ENCODE measurements at regions of chr4 and their contacts with region 1.

Region 1: DNA sequence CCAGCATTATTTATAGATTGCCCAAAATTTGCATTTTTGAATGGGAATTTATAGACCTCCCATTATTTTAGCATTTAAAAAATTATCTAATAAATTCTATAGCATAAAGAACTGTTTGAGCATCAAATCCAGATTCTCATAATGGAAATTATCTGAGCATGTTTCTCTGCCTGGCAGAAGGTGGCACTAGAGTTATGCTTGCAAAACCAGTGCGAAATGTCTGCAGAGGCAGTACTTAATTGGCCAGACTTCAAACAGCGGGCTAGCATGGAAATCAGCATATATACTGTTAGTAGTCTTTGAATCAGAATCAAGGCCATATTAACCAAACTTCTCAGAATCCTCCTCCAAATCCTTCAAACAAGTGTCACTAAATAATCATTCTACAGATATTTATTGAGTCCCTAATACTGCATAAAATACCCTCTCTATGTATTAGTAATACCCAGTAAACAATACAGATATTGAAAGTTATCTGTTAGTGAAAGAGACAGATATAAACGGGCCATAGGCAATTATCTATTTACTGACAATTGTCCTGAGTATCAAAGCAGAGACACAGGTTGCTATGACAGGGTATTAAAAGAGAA is 78.7 kb upstream of the DCLK2 start:
- DNase-seq: peak; percentile 87
- ATAC-seq: peak; percentile 56
- H3K4me3 ChIP-seq: no peak overlapping the region
- H3K27ac ChIP-seq: no peak overlapping the region
- H3K4me1 ChIP-seq: peaks cover 14% of the 10 kb centered on the region
- H3K27me3 ChIP-seq: no peaks in the 10 kb centered on the region
- CTCF ChIP-seq: peak; percentile 95
- POLR2A ChIP-seq: no peak
- RAD21 ChIP-seq: peak; percentile 96

Region 2: DNA sequence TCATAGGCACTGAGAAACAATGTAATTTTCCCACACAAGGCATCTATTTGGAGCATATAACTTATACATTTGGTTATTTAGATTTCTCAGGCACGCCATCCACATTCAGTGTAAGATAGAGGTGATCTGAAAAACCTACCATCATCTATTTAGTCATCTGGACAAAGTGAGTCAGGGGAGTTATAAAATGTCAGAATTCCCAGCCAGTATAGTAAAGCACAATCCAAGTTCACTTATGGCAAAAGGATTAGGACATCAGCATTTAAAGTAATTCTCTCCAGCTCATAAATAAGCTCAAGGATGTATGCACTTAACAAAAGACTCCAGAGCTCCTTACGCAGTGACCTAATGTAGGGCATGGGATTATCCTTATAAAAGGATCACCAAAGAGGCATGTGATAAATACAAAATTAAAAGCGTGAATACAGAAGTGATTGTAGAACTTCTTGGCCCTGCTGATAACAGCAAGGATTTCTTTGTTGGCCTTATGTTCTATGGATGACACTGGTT is 13.3 kb after region 1 on chr4:
- CTCF ChIA-PET with region 1: no interaction called
- POLR2A ChIA-PET with region 1: no interaction called
- dilution Hi-C with region 1: no loop called
- in situ Hi-C with region 1: no loop called
- intact Hi-C with region 1: no loop called
- DNase-seq: peak; percentile 37
- ATAC-seq: no peak
- H3K4me3 ChIP-seq: no peak overlapping the region
- H3K27ac ChIP-seq: no peak overlapping the region
- H3K4me1 ChIP-seq: peaks cover 4% of the 10 kb centered on the region; the same call in 1 of the 2 replicates
- H3K27me3 ChIP-seq: no peaks in the 10 kb centered on the region
- CTCF ChIP-seq: no peak
- POLR2A ChIP-seq: no peak
- RAD21 ChIP-seq: no peak

Region 3: GRCh38 chr4:150078637-150079581 is 79.3 kb after region 1 on chr4:
- CTCF ChIA-PET with region 1: no interaction called
- POLR2A ChIA-PET with region 1: no interaction called
- dilution Hi-C with region 1: no loop called
- in situ Hi-C with region 1: no loop called
- intact Hi-C with region 1: loop called (anchors 1 kb)
- DNase-seq: peak; percentile 46
- ATAC-seq: peak; percentile 75
- H3K4me3 ChIP-seq: peak overlapping the region; percentile 78
- H3K27ac ChIP-seq: peak overlapping the region; percentile 69
- H3K4me1 ChIP-seq: no peaks in the 10 kb centered on the region
- H3K27me3 ChIP-seq: no peaks in the 10 kb centered on the region
- CTCF ChIP-seq: 0 out of 2 replicates have a peak, but pooled peaks have one; percentile 14
- POLR2A ChIP-seq: no peak
- RAD21 ChIP-seq: peak; percentile 9; the same call in 1 of the 2 replicates

Region 4: DNA sequence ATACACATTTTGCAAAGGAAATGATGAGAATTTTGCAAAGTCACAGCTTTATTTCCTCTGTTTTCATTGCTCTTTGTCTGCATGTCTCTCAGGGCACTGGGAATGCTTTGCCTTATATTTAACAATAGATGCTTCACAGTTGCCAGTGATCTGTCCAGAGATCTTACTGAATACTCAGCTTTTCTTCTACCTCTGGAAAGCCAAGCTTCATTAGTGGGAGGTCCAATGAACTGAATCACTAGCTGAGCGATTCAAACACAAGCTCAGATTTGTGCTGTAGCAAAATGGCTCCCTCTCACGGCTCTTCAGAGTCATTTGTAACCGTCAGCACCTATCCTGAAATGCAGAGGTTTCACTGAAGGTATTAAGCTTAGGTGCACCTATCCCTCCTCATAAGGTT is 217.6 kb after region 1 on chr4:
- CTCF ChIA-PET with region 1: interaction called, 3 read pairs
- POLR2A ChIA-PET with region 1: no interaction called
- dilution Hi-C with region 1: no loop called
- in situ Hi-C with region 1: no loop called
- intact Hi-C with region 1: loop called (anchors 2 kb)
- DNase-seq: peak; percentile 87
- ATAC-seq: peak; percentile 87
- H3K4me3 ChIP-seq: no peak overlapping the region
- H3K27ac ChIP-seq: peak overlapping the region; percentile 21; the same call in 1 of the 2 replicates
- H3K4me1 ChIP-seq: peaks cover 8% of the 10 kb centered on the region
- H3K27me3 ChIP-seq: no peaks in the 10 kb centered on the region
- CTCF ChIP-seq: peak; percentile 50
- POLR2A ChIP-seq: no peak
- RAD21 ChIP-seq: peak; percentile 64

Region 5: DNA sequence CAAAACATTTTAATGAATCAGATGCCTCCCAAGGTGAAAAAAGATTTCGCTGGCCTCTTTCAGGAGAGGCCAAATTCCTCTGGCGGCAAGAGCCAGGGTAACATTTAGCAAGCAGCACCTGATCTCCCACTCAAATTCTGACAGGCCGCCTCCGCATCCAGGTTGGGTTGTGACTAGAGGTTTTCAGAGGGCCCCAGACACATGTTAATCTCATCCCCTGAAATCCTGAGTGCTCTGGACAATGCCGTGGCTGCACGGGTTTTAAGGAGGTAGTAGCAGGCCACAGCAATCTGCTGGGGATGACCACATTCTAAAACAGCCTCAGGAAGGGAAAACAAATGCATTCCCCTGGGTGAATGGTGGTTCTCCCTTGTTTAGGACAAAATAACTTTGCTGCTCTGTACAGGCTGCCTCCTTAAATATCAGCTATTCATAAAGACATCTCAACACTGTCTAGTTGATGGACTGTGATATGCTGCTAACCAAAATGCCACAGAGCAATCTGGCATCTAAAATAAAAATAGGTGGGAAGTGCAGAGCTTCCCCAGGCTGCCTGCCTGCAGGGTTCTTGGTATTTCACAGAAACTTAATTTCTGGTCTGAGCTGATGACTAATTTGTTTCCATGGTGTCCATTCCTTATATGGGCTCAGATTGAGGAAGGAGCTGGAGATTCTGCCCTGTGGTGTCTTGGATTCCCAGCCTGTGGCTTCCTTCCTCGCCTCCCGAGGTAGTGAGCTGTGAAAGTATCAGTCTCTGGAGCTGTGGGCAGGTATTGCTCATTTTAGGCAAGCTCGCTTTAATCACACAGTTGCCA is 280.7 kb after region 1 on chr4:
- CTCF ChIA-PET with region 1: no interaction called
- POLR2A ChIA-PET with region 1: no interaction called
- dilution Hi-C with region 1: no loop called
- in situ Hi-C with region 1: no loop called
- intact Hi-C with region 1: loop called (anchors 5 kb)
- DNase-seq: peak; percentile 86
- ATAC-seq: peak; percentile 80
- H3K4me3 ChIP-seq: no peak overlapping the region
- H3K27ac ChIP-seq: peak overlapping the region; percentile 91
- H3K4me1 ChIP-seq: peaks cover 19% of the 10 kb centered on the region
- H3K27me3 ChIP-seq: no peaks in the 10 kb centered on the region
- CTCF ChIP-seq: no peak
- POLR2A ChIP-seq: no peak; the same call in 1 of the 2 replicates
- RAD21 ChIP-seq: no peak

Region 6: GRCh38 chr4:150418757-150419410 is 419.3 kb after region 1 on chr4:
- CTCF ChIA-PET with region 1: no interaction called
- POLR2A ChIA-PET with region 1: no interaction called
- dilution Hi-C with region 1: no loop called
- in situ Hi-C with region 1: no loop called
- intact Hi-C with region 1: no loop called
- DNase-seq: no peak
- ATAC-seq: no peak
- H3K4me3 ChIP-seq: no peak overlapping the region
- H3K27ac ChIP-seq: no peak overlapping the region
- H3K4me1 ChIP-seq: no peaks in the 10 kb centered on the region
- H3K27me3 ChIP-seq: no peaks in the 10 kb centered on the region
- CTCF ChIP-seq: no peak
- POLR2A ChIP-seq: no peak
- RAD21 ChIP-seq: no peak

Region 7: DNA sequence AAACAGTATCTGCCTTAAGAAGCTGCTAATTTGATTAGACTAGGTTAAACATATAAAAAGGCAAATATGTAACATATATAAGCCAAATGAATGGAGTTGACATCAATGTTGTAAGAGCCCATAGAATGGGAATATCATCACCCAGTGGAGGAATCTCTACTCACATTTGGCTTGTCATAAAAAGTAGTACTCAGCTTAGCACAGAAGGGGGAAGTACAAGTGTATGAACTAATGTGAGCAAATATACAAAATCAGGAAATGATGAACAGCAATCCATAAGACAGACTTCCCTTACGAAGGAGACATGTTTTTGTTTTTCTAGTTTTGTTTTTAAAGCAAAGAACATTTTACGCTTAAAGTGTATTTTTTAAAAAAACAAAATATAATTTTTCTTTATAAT is 657.3 kb after region 1 on chr4:
- CTCF ChIA-PET with region 1: no interaction called
- POLR2A ChIA-PET with region 1: no interaction called
- dilution Hi-C with region 1: no loop called
- in situ Hi-C with region 1: no loop called
- intact Hi-C with region 1: loop called (anchors 10 kb)
- DNase-seq: no peak
- ATAC-seq: no peak
- H3K4me3 ChIP-seq: no peak overlapping the region
- H3K27ac ChIP-seq: no peak overlapping the region
- H3K4me1 ChIP-seq: no peaks in the 10 kb centered on the region
- H3K27me3 ChIP-seq: no peaks in the 10 kb centered on the region
- CTCF ChIP-seq: no peak
- POLR2A ChIP-seq: no peak
- RAD21 ChIP-seq: no peak